ENCODE measurements at regions of chr1 and their contacts with region 1.

Region 1: DNA sequence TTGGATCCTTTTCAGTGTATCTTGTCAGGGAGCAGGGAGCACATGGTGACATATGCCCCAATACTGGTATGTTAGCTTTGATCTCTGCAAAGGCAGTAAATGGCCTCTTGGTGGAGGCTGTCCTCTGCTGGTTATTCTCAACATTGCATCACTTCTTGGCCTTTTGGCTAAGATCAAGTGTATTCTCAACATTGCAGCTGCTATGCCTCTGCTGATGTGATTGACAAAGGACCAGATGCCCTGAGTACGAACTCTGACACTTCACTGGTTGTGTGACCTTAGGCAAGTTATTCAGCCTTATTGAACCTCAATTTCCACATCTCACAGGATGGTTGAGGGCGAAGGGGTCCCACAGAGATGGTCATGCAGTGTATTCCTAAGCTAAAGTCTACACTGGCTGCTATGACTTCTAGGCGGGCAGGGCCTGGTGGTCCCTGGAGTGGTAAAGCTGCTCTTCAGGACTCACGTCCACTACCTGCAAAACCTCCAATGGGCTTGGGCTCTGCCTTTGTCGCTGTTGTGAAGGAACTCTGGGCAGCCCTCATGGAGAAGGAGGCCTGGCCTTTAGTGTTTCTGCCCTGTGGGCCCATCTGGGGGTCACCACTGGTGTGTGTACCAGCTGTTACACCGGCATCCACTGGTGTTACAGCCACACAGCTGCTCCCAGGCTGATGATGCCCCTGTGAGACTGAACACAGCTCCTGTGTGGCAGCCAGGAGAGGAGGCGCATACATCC is 64.8 kb downstream of the DNTTIP2 start:
- DNase-seq: peak in 1 of 2 donors; percentile 75
- ATAC-seq: peak; percentile 69 to 87 (median 78)
- H3K4me3 ChIP-seq: no peak overlapping the region
- H3K27ac ChIP-seq: no peak overlapping the region
- H3K4me1 ChIP-seq: peaks cover 2 to 57% (median 45%) of the 10 kb centered on the region in 9 donors
- H3K27me3 ChIP-seq: no peaks in the 10 kb centered on the region
- CTCF ChIP-seq: peak; percentile 96 to 100 (median 98)

Region 2: DNA sequence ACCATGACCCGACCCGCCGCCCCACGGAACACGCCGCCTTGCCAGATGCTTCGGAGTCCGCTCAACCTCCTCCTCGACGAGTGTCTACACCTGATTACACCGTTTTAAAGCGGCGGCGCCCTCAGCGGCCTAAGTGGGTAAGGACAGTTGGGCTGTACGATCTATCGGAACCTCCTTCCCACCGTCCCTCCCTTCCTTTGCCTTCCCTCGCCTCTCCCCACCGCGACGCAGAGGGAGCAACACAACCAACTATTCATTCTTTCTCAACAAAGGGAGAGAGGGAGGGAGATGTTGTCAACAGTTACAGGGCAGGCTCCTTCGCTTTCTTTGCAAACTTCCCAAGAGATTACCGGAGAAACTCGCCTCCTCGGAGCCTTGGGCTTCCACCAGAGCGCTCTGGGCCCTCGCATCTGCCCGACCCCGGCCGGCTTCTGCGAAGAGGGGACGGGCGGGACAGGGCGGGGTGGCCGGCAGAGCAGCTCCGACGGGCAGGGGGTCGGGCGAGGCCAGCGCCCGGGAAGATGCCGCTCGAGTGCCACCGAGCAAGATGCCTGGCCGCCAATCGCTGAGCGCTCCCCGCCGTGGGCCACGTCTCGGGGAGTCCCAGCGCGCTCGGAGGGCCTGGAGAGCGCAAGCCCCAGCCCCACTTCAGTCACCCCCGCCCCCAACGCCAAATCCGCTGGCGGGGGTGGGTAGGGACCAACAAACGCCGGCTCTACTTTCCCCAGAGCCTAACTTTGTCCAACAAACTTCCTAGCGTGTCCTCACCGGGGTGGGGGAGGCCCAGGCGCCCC is 133.3 kb before region 1 on chr1:
- intact Hi-C with region 1: loop called in 9 of 10 experiments (anchors 2 to 5 kb)
- DNase-seq: peak; percentile 82 to 86
- ATAC-seq: peak; percentile 87 to 94 (median 91)
- H3K4me3 ChIP-seq: peak overlapping the region; percentile 73 to 95 (median 86)
- H3K27ac ChIP-seq: peak overlapping the region; percentile 78 to 96 (median 90)
- H3K4me1 ChIP-seq: peaks cover 9 to 58% (median 45%) of the 10 kb centered on the region in 9 donors
- H3K27me3 ChIP-seq: peaks cover 0 to 32% (median 0%) of the 10 kb centered on the region in 7 donors
- CTCF ChIP-seq: peak; percentile 42 to 74 (median 57)

Region 3: DNA sequence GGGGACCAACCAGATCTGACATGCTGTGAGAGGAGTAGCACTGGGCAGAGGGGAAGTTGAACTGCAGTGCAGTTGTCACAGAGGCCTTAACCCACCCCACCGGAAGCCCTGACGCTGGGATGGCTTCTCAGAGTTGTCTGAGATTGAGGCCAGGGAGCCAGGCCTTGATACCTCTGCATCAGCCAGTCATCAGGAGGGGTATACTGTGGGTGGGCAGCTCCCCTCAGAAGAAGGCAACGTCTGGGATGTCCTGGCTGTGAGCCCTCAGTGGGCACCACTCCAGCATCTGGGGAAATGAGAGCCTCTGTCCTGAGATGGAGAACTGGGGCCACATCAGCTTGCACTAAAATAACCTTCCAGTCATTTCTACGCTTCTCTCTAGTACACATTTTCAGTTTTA is 84.7 kb before region 1 on chr1:
- intact Hi-C with region 1: loop called in 4 of 10 experiments (anchors 5 kb)
- DNase-seq: no peak
- ATAC-seq: peak in 1 of 8 donors; percentile 40
- H3K4me3 ChIP-seq: no peak overlapping the region
- H3K27ac ChIP-seq: no peak overlapping the region
- H3K4me1 ChIP-seq: peaks cover 0 to 41% (median 7%) of the 10 kb centered on the region in 9 donors
- H3K27me3 ChIP-seq: no peaks in the 10 kb centered on the region
- CTCF ChIP-seq: no peak

Region 4: DNA sequence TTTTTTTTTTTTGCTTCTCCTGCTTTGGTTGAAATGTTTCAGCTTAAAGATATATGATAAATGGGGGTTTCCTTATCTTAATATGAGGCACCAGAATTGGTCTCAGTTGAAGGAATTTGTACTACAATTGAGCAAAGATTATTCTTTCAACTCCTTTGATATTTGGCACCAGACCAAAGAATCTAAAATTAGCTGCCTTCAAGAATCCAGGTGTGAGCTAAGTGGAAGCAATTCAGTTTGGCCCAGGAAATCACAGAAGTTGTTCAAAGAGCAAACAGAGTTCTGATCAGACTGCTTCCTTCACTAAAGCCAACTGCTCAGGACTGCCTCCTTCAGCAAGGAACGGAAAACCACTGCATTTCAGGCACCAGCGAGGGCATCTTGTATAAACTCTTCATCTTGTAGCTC is 64.3 kb before region 1 on chr1:
- intact Hi-C with region 1: no loop called
- DNase-seq: no peak
- ATAC-seq: no peak
- H3K4me3 ChIP-seq: no peak overlapping the region
- H3K27ac ChIP-seq: no peak overlapping the region
- H3K4me1 ChIP-seq: peaks cover 4 to 44% (median 34%) of the 10 kb centered on the region in 9 donors
- H3K27me3 ChIP-seq: peaks cover 0 to 13% (median 0%) of the 10 kb centered on the region in 7 donors
- CTCF ChIP-seq: peak in 6 of 9 donors; percentile 7 to 39 (median 23)

Region 5: DNA sequence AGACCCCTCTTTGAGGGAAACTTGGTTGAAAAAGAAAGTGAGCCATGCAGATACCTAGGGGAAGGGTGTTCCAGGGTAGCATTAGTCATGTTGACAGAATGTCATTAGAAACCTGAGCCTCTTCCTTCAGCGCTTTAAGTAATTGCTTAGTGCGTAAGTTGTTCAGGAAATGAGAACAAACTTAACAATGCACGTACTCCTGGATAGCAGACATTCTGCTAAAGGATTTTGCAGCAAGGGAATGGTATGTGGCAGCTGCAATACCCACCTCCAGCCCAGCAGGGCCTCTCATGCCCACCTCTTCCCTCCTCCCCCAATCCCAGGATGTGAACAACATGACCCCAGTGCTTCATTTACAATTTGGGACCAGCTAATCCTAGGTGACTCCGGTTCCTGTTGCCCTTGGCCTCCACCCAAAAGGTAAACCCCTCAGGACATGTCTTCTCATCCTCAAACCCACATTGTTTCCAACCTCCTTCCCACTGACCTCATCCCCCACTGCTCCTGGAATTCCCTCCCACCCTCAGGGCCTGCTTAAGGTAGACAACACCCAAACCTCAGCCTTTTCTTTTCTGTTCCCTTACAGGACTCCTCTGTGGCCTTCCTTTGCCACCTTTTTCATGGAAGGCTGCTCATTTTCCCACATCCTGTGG is 34.6 kb before region 1 on chr1:
- intact Hi-C with region 1: no loop called
- DNase-seq: no peak
- ATAC-seq: peak in 6 of 8 donors; percentile 42 to 87 (median 72)
- H3K4me3 ChIP-seq: no peak overlapping the region
- H3K27ac ChIP-seq: peak overlapping the region in 3 of 10 donors; percentile 18 to 60 (median 54)
- H3K4me1 ChIP-seq: no peaks in the 10 kb centered on the region
- H3K27me3 ChIP-seq: peaks cover 0 to 3% (median 0%) of the 10 kb centered on the region in 7 donors
- CTCF ChIP-seq: no peak

Region 6: GRCh38 chr1:93851327-93851712 is 37.1 kb after region 1 on chr1:
- intact Hi-C with region 1: no loop called
- DNase-seq: no peak
- ATAC-seq: no peak
- H3K4me3 ChIP-seq: no peak overlapping the region
- H3K27ac ChIP-seq: no peak overlapping the region
- H3K4me1 ChIP-seq: peaks cover 0 to 13% (median 8%) of the 10 kb centered on the region in 9 donors
- H3K27me3 ChIP-seq: no peaks in the 10 kb centered on the region
- CTCF ChIP-seq: no peak

Region 7: GRCh38 chr1:93980320-93981273 is 166.4 kb after region 1 on chr1:
- intact Hi-C with region 1: no loop called
- DNase-seq: no peak
- ATAC-seq: peak in 5 of 8 donors; percentile 22 to 56 (median 46)
- H3K4me3 ChIP-seq: no peak overlapping the region
- H3K27ac ChIP-seq: peak overlapping the region in 7 of 10 donors; percentile 21 to 77 (median 71)
- H3K4me1 ChIP-seq: peaks cover 0 to 23% (median 11%) of the 10 kb centered on the region in 9 donors
- H3K27me3 ChIP-seq: no peaks in the 10 kb centered on the region
- CTCF ChIP-seq: peak in 5 of 9 donors; percentile 9 to 29 (median 23)